ENCODE measurements at regions of chr12 and their contacts with region 1.

Region 1: GRCh38 chr12:6230321-6231110 is 30.3 kb downstream of the CD9 start:
- DNase-seq: peak; percentile 65
- ATAC-seq: peak; percentile 14 to 29

Region 2: DNA sequence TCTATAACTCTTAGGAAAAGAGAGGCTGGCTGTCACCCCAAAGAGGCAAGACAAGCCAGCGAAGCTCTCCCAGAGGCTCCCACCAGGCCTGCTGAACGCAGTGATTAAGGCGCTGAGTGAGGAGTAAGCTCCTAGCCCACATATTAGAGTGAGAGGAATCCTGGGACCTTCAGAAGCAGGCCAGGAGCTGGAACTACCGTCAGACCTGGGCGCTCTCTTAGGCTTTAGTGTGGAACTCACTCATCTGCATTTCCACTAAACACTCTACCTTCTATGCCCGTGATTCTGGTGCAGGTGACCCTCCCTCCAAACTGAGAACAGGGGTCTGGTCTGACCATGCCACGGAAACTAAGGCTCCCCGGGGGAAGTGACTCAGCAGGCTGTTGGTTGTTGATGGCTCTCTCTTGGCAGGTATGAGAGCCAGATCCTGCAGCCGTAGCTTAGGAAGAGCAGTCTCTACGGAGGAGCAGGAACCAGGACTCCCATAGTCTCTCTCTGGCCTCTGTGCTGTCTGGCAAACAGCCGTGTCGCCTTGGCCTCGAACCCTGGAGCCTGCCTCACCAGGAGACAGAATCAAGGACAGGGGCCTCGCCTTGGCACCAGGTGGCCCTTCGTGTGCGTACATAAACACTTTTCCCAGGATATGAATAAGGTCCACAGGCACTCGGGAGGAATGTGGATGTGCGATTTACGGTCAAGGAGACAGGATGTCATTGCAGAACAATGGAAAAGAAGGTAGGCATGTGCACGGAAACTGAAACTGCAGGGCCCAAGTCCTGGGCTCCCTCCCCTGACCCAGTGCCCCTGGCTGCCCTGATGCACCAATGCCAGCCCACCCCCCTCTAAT is 114.1 kb before region 1 on chr12:
- intact Hi-C with region 1: no loop called
- DNase-seq: peak; percentile 64
- ATAC-seq: peak; percentile 28 to 48

Region 3: DNA sequence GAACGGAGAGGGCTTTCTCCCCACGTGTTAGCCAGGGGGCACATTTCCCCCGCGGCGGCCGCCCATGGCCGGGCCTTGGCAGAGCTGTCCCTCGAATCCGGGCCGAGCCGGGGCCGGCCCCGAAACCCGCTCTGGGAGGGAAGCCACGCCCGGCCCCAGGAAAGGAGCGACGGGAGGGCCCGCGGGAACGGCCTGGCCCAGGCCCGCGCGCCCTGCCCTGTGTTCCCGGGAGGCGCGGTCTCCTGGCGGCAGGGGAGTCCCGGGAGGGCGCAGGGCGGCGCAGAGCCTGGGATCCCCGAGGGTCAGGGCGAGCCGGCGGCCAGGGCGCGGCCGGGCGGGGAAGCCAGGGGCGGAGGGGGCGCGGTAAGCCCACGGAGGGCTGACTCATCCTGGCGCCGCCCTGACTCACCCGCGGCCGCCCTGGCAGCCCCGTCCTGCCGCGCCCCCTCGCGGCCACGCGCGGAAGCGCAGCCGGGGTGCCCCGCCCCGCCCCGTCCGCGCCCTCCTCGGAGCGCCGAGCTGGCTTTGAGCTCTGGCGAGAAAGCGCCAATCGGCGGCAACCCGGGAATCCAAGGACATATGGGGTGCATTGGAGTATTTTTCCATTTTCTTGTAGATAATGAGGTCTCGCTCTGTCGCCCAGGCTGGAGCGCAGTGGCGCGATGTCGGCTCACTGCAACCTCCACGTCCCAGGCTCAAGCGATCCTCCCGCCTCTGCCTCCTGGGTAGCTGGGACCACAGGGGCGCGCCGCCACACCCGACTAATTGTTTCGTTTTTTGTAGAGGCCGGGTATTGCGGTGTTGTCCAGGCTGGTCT is 48.1 kb after region 1 on chr12:
- intact Hi-C with region 1: loop called in 1 of 2 experiments (anchors 5 kb)
- DNase-seq: peak; percentile 92
- ATAC-seq: peak; percentile 94 to 96